K562 (cell line): ENCODE measurements at regions of chr9 and their contacts with region 1.

Region 1: GRCh38 chr9:129884220-129885017 is 49.2 kb downstream of the USP20 start:
- DNase-seq: peak; percentile 95 to 100 (median 96)
- ATAC-seq: peak; percentile 82
- H3K4me3 ChIP-seq: peak overlapping the region; percentile 48
- H3K27ac ChIP-seq: peak overlapping the region; percentile 91
- H3K4me1 ChIP-seq: peaks cover 50 to 53% of the 10 kb centered on the region in 2 experiments
- H3K27me3 ChIP-seq: no peaks in the 10 kb centered on the region; a peak in 1 of 5 replicates
- CTCF ChIP-seq: peak in 1 of 3 experiments; percentile 58; a peak in 3 of 6 replicates
- EP300 ChIP-seq: peak; percentile 52; the same call in 1 of the 2 replicates
- POLR2A ChIP-seq: no peak
- RAD21 ChIP-seq: peak in 1 of 2 experiments; percentile 21; a peak in 1 of 4 replicates

Region 2: DNA sequence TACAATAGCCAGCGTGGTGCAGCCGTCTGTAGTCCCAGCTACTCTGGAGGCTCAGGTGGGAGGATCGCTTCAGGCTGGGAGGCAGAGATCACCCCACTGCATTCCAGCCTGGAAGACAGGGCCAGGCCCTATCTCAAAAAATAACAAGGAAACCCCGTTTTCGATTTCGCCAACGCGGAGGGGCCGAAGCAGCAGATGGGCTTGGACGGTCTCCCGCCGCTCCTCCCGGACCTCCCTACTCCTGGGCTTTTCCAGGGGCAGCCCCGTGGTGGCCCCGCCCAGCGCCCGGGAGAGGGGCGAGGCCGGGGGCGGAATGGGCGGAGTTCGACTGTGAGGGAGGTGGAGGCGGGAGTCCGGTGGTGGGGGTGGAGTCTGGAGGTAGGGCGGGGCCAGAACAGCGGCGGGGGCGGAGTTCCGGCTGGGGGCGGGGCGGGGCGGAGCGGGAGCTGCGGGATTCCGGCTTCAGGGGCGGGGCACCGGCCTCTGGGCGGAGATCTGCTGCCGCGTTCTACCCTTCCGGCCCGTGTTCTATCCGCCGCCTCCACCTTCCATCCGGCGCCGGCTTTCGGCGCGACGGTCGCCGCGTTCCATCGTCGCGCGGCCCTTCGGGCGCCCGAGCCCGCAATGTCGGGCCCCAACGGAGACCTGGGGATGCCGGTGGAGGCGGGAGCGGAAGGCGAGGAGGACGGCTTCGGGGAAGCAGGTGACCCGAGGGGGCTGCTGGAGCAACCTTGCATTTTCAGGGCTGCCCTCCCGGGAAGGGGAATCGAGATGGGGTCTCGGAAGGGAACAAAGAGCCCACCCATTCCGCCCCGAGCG is 1724.4 kb before region 1 on chr9 and contains the start of gene BBLN:
- CTCF ChIA-PET with region 1: no interaction called
- POLR2A ChIA-PET with region 1: no interaction called
- in situ Hi-C with region 1: no loop called
- intact Hi-C with region 1: loop called (anchors 2 kb)
- DNase-seq: peak; percentile 99 to 100 (median 100)
- ATAC-seq: peak; percentile 91
- H3K4me3 ChIP-seq: peak within 1 kb of the TSS; percentile 72
- H3K27ac ChIP-seq: peak within 1 kb of the TSS; percentile 90
- H3K4me1 ChIP-seq: peaks cover 10 to 43% of the 10 kb centered on the region in 2 experiments
- H3K27me3 ChIP-seq: no peaks in the 10 kb centered on the region
- CTCF ChIP-seq: peak in 1 of 3 experiments; percentile 24; a peak in 2 of 6 replicates
- EP300 ChIP-seq: peak; percentile 16; the same call in 1 of the 2 replicates
- POLR2A ChIP-seq: peak; percentile 97
- RAD21 ChIP-seq: peak; percentile 10 to 20; a peak in 2 of 4 replicates
- polyA plus RNA-seq, gene BBLN: 4.2 to 13.7 TPM

Region 3: GRCh38 chr9:128322404-128323211 is 1561.8 kb before region 1 on chr9 and contains the starts of genes COQ4 and TRUB2:
- CTCF ChIA-PET with region 1: no interaction called
- POLR2A ChIA-PET with region 1: no interaction called
- in situ Hi-C with region 1: loop called (anchors 10 kb)
- intact Hi-C with region 1: no loop called
- DNase-seq: peak; percentile 98 to 100 (median 100)
- ATAC-seq: peak; percentile 95
- H3K4me3 ChIP-seq: peak within 1 kb of the TSS; percentile 67
- H3K27ac ChIP-seq: peak within 1 kb of the TSS; percentile 94
- H3K4me1 ChIP-seq: peaks cover 8 to 19% of the 10 kb centered on the region in 2 experiments
- H3K27me3 ChIP-seq: no peaks in the 10 kb centered on the region
- CTCF ChIP-seq: peak in 2 of 3 experiments; percentile 32 to 37; a peak in 4 of 6 replicates
- EP300 ChIP-seq: peak; percentile 66
- POLR2A ChIP-seq: no peak
- RAD21 ChIP-seq: peak; percentile 21 to 45
- polyA plus RNA-seq, gene COQ4: 9.1 to 11.3 TPM
- polyA plus RNA-seq, gene TRUB2: 9.3 to 24.2 TPM

Region 4: GRCh38 chr9:129737479-129738274 is 146.7 kb before region 1 on chr9:
- CTCF ChIA-PET with region 1: no interaction called
- POLR2A ChIA-PET with region 1: no interaction called
- in situ Hi-C with region 1: no loop called
- intact Hi-C with region 1: loop called (anchors 10 kb)
- DNase-seq: peak; percentile 94 to 98 (median 96)
- ATAC-seq: peak; percentile 95
- H3K4me3 ChIP-seq: peak overlapping the region; percentile 53
- H3K27ac ChIP-seq: peak overlapping the region; percentile 81
- H3K4me1 ChIP-seq: peaks cover 6 to 42% of the 10 kb centered on the region in 2 experiments; a peak in 4 of 5 replicates
- H3K27me3 ChIP-seq: peaks cover 10 to 14% of the 10 kb centered on the region in 2 experiments
- CTCF ChIP-seq: peak; percentile 95 to 99 (median 98)
- EP300 ChIP-seq: peak; percentile 25; the same call in 1 of the 2 replicates
- POLR2A ChIP-seq: peak; percentile 81
- RAD21 ChIP-seq: peak; percentile 99 to 100

Region 5: GRCh38 chr9:129863059-129863690 is 21.2 kb before region 1 on chr9:
- CTCF ChIA-PET with region 1: no interaction called
- POLR2A ChIA-PET with region 1: interaction called, 30 read pairs
- in situ Hi-C with region 1: no loop called
- intact Hi-C with region 1: loop called (anchors 1 kb)
- DNase-seq: peak; percentile 97 to 100 (median 98)
- ATAC-seq: peak; percentile 91
- H3K4me3 ChIP-seq: peak overlapping the region; percentile 0; the same call in 1 of the 2 replicates
- H3K27ac ChIP-seq: peak overlapping the region; percentile 93
- H3K4me1 ChIP-seq: peaks cover 58 to 80% of the 10 kb centered on the region in 2 experiments
- H3K27me3 ChIP-seq: no peaks in the 10 kb centered on the region
- CTCF ChIP-seq: peak in 1 of 3 experiments; percentile 6; a peak in 2 of 6 replicates
- EP300 ChIP-seq: peak; percentile 99
- POLR2A ChIP-seq: peak; percentile 68; the same call in 1 of the 2 replicates
- RAD21 ChIP-seq: peak; percentile 67 to 70

Region 6: GRCh38 chr9:129932303-129933151 is 48.1 kb after region 1 on chr9:
- CTCF ChIA-PET with region 1: no interaction called
- POLR2A ChIA-PET with region 1: no interaction called
- in situ Hi-C with region 1: no loop called
- intact Hi-C with region 1: no loop called
- DNase-seq: peak in 1 of 4 experiments; percentile 16
- ATAC-seq: peak; percentile 37
- H3K4me3 ChIP-seq: no peak overlapping the region
- H3K27ac ChIP-seq: no peak overlapping the region
- H3K4me1 ChIP-seq: peaks cover 4 to 31% of the 10 kb centered on the region in 2 experiments; a peak in 4 of 5 replicates
- H3K27me3 ChIP-seq: no peaks in the 10 kb centered on the region
- CTCF ChIP-seq: no peak
- EP300 ChIP-seq: no peak
- POLR2A ChIP-seq: no peak
- RAD21 ChIP-seq: no peak

Region 7: DNA sequence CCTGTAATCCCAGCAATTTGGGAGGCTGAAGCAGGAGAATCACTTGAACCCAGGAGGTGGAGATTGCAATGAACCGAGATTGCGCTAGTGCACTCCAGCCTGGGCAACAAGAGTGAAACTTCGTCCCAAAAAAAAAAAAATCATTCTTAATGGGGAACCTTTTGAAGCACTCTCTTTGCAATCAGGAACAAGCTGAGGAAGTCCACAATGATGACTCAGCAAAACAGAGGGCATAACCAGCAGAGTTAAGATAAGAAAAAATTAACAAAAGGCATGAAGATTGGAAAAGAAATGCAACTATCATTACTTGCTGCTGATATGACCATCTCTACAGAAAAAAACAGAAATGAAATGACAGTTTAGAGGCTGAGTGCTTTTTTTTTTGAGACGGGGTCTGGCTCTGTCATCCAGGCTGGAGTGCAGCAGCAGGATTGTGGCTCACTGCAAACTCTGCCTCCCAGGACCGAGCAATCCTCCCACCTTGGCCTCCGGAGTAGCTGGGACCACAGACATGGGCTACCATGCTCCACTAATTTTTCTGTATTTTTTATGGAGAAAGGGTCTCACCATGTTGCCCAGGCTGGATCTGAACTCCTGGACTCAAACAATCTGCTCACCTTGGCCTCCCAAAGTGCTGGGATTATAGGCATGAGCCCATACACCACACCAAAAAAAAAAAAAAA is 70.6 kb after region 1 on chr9:
- CTCF ChIA-PET with region 1: no interaction called
- POLR2A ChIA-PET with region 1: interaction called, 3 read pairs
- in situ Hi-C with region 1: no loop called
- intact Hi-C with region 1: loop called (anchors 5 kb)
- DNase-seq: peak; percentile 40 to 79 (median 44)
- ATAC-seq: peak; percentile 80
- H3K4me3 ChIP-seq: no peak overlapping the region
- H3K27ac ChIP-seq: peak overlapping the region; percentile 68; the same call in 2 of the 3 replicates
- H3K4me1 ChIP-seq: peaks cover 11 to 17% of the 10 kb centered on the region in 2 experiments
- H3K27me3 ChIP-seq: no peaks in the 10 kb centered on the region
- CTCF ChIP-seq: 0 out of 6 replicates have a peak, but pooled peaks of 1 of the 3 experiments have one; percentile 1
- EP300 ChIP-seq: peak; percentile 76
- POLR2A ChIP-seq: no peak
- RAD21 ChIP-seq: peak in 1 of 2 experiments; percentile 29; a peak in 1 of 4 replicates

Region 8: DNA sequence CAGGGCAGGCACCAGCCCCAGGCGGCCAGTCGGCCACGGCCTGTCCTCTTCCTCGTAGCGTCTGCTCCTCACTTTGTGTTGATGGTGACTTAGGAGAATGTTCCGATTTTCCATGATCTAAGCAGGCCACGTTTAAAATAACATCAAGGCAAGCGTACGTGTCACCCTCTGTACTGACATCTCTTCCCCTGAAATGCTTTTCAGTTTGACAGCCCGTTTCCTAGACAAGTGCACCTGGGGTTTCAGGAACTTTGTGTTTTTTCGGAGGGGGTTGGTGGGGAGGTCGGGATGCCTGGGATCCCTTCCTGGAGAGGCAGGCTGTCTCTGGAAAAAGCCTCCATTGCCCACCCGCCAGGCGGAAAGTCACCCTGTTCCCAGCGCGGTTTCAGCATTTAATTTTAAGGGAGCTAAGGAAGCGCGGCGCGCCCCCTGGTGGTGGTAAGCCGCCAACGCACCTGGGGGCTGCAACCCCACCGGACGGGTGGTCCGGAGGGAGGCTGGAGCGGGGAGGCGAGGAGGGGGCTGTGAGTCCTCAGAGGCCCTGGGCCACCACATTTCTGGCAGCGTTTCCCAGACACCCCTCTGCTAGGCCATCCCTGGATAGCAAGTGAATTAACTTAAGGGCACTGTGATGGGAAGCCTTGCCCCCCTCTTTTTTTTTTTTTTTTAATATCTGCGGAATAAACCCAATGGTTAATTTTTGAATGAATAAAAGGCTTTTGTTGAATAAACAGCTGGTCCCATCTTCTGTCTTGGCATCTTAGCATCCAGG is 351.7 kb after region 1 on chr9:
- CTCF ChIA-PET with region 1: interaction called, 4 read pairs
- POLR2A ChIA-PET with region 1: no interaction called
- in situ Hi-C with region 1: no loop called
- intact Hi-C with region 1: loop called (anchors 2 kb)
- DNase-seq: peak; percentile 73 to 79 (median 77)
- ATAC-seq: peak; percentile 70
- H3K4me3 ChIP-seq: no peak overlapping the region
- H3K27ac ChIP-seq: peak overlapping the region; percentile 38; the same call in 1 of the 3 replicates
- H3K4me1 ChIP-seq: peaks cover 21 to 32% of the 10 kb centered on the region in 2 experiments
- H3K27me3 ChIP-seq: no peaks in the 10 kb centered on the region
- CTCF ChIP-seq: peak; percentile 88 to 96 (median 89)
- EP300 ChIP-seq: no peak
- POLR2A ChIP-seq: no peak
- RAD21 ChIP-seq: peak; percentile 85 to 90